HAP-1 (cell line): ENCODE measurements at regions of chr11 and their contacts with region 1.

Region 1: DNA sequence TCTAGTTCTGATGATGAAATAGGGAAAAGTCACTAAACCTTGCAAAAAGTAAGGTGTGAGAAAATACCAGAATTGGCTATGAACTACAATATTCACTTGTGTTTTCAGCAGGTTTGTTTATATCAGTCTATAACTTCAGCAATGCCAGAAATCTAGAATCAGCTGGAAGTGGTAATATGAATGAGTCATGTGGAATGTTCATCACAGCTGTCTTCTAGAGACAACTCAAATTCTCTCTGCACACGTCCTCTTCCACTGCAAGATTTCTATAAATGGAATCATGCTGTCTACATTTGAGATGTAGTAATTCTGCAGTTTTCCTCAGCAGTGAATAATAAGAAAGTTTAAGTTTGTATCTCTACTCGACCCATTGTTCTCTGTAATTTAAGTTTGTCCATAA is 89.9 kb downstream of the OR4A15 start:
- DNase-seq: no peak
- H3K4me3 ChIP-seq: no peak overlapping the region
- H3K4me1 ChIP-seq: no peaks in the 10 kb centered on the region
- H3K27me3 ChIP-seq: no peaks in the 10 kb centered on the region

Region 2: DNA sequence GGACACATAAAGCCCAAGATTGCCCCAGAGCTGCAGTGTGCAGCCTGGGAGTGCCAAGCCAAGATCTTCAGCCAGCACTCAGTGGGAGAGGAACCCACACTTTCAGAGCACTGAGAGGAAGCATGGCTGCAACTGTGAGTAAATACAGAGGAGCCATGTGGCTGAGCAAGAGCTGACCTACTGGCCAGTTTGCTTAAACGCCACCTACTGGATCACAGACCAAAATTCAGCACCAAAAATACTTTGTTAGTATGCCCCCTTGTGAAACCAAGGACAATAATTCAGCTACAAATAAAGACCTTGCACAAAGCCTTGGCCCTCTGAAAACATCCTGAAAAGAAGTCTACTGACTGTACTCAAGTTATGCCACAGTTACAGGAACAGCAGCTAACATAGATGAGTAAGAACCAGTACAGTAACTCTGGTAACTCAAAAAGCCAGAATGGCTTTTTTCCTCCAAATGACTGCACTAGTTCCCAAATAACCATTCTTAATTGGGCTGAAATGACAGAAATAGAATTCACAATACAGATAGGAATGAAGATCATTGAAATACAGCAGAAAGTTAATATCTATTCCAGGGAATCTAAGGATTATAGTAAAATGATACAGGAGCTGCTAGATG is 100.0 kb before region 1 on chr11:
- in situ Hi-C with region 1: loop called (anchors 25 kb)
- DNase-seq: peak; percentile 50 to 67
- H3K4me3 ChIP-seq: no peak overlapping the region
- H3K4me1 ChIP-seq: no peaks in the 10 kb centered on the region; the same call in 1 of the 2 replicates
- H3K27me3 ChIP-seq: no peaks in the 10 kb centered on the region

Region 3: DNA sequence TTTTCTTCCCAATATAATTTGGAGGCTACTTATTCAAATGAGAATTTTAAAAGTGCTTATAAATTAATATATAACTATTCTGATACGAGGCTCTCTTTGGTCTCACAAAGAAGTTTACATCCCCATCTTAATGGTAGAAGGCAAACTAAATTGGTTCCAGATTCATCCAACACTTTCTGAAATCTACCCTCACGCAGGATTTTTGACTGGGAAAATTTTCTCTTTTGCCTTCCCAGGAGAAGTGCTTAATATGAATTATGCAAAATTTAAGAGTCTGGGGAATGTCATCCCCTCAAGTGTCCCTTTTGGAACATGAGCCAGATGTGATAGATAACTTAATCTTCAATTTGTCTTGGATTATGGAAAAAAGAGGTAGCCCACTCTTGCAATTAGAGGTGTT is 149.9 kb after region 1 on chr11 and contains the start of gene OR4C11:
- in situ Hi-C with region 1: no loop called
- DNase-seq: no peak
- H3K4me3 ChIP-seq: no peak within 1 kb of the TSS
- H3K4me1 ChIP-seq: no peaks in the 10 kb centered on the region
- H3K27me3 ChIP-seq: no peaks in the 10 kb centered on the region